Common myeloid progenitor, CD34-positive (primary cell): ENCODE measurements at regions of chr20 and their contacts with region 1.

Region 1: DNA sequence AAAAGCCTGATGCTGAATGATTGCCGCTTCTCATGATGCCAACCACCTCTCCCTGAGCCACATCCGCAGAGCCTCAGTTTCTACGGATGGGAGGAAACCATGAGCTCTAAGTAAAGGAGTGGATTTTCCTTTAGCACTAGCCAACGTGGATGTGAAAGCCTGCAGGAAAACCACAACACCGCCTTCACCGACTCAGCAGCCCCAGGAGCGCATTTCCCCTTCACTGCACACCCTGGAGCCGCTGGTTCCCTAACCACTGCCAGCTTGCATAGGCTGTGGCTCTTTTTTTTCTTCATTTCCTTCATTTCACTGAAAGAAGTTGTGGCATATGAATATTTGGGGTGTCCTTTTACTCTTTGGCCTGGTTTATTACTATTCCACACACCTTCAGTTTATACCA is 50.5 kb upstream of the SSTR4 start:
- DNase-seq: peak; percentile 71 to 87 (median 85)
- H3K4me3 ChIP-seq: peak overlapping the region in 3 of 7 experiments; percentile 30 to 48 (median 40)
- H3K27ac ChIP-seq: peak overlapping the region in 1 of 2 experiments; percentile 31
- H3K4me1 ChIP-seq: peaks cover 14 to 42% (median 35%) of the 10 kb centered on the region in 4 experiments
- H3K27me3 ChIP-seq: no peaks in the 10 kb centered on the region

Region 2: GRCh38 chr20:22974353-22974752 is 10.3 kb before region 1 on chr20:
- CTCF ChIA-PET with region 1: interaction called, 10 read pairs
- POLR2A ChIA-PET with region 1: no interaction called
- DNase-seq: peak; percentile 29 to 59 (median 51)
- H3K4me3 ChIP-seq: no peak overlapping the region
- H3K27ac ChIP-seq: no peak overlapping the region
- H3K4me1 ChIP-seq: peaks cover 0 to 3% (median 0%) of the 10 kb centered on the region in 4 experiments
- H3K27me3 ChIP-seq: no peaks in the 10 kb centered on the region

Region 3: GRCh38 chr20:22999752-23000151 is 15.1 kb after region 1 on chr20:
- CTCF ChIA-PET with region 1: no interaction called
- POLR2A ChIA-PET with region 1: no interaction called
- DNase-seq: no peak
- H3K4me3 ChIP-seq: no peak overlapping the region
- H3K27ac ChIP-seq: no peak overlapping the region
- H3K4me1 ChIP-seq: no peaks in the 10 kb centered on the region
- H3K27me3 ChIP-seq: no peaks in the 10 kb centered on the region

Region 4: GRCh38 chr20:23061734-23062561 is 77.3 kb after region 1 on chr20:
- CTCF ChIA-PET with region 1: no interaction called
- POLR2A ChIA-PET with region 1: no interaction called
- DNase-seq: peak in 2 of 3 donors; percentile 45 to 46
- H3K4me3 ChIP-seq: no peak overlapping the region
- H3K27ac ChIP-seq: no peak overlapping the region
- H3K4me1 ChIP-seq: peaks cover 0 to 24% (median 5%) of the 10 kb centered on the region in 4 experiments
- H3K27me3 ChIP-seq: no peaks in the 10 kb centered on the region